Transverse colon (tissue), 4 donors: ENCODE measurements at regions of chr22 and their contacts with region 1.

Region 1: GRCh38 chr22:19291580-19292457 is at the start of gene CLTCL1:
- DNase-seq: peak; percentile 86
- H3K4me3 ChIP-seq: peak within 1 kb of the TSS; percentile 80 to 99 (median 94)
- H3K27ac ChIP-seq: peak within 1 kb of the TSS; percentile 75 to 89 (median 83)
- H3K4me1 ChIP-seq: peaks cover 5 to 16% (median 15%) of the 10 kb centered on the region in 4 donors
- H3K27me3 ChIP-seq: peaks cover 9% of the 10 kb centered on the region
- CTCF ChIP-seq: no peak
- EP300 ChIP-seq: no peak
- POLR2A ChIP-seq: peak; percentile 6
- total RNA-seq, gene CLTCL1: 3.8 to 8.6 (median 5.6) TPM

Region 2: GRCh38 chr22:19232623-19233022 is 59.2 kb before region 1 on chr22:
- in situ Hi-C with region 1: no loop called
- intact Hi-C with region 1: no loop called
- DNase-seq: no peak
- H3K4me3 ChIP-seq: no peak overlapping the region
- H3K27ac ChIP-seq: no peak overlapping the region
- H3K4me1 ChIP-seq: no peaks in the 10 kb centered on the region
- H3K27me3 ChIP-seq: no peaks in the 10 kb centered on the region
- CTCF ChIP-seq: no peak
- EP300 ChIP-seq: no peak
- POLR2A ChIP-seq: no peak

Region 3: DNA sequence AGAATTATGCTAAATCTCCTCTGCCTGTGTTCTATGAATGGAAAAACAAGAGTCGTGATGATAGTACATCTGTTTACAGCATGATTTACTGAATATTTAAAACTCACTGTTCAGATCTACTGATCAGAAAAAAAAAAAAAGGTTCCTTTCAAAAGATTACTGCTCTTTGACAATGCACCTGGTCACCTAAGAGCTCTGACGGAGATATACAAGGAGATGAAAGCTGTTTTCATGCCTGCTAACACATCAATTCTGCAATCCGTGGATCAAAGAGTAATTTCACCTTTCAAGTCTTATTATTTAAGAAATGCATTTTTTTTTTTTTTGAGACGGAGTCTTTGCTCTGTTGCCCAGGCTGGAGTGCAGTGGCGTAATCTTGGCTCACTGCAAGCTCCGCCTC is 31.0 kb before region 1 on chr22:
- in situ Hi-C with region 1: no loop called
- intact Hi-C with region 1: loop called (anchors 1 kb)
- DNase-seq: no peak
- H3K4me3 ChIP-seq: no peak overlapping the region
- H3K27ac ChIP-seq: no peak overlapping the region
- H3K4me1 ChIP-seq: peaks cover 0 to 10% (median 0%) of the 10 kb centered on the region in 4 donors
- H3K27me3 ChIP-seq: no peaks in the 10 kb centered on the region
- CTCF ChIP-seq: no peak
- EP300 ChIP-seq: no peak
- POLR2A ChIP-seq: no peak

Region 4: DNA sequence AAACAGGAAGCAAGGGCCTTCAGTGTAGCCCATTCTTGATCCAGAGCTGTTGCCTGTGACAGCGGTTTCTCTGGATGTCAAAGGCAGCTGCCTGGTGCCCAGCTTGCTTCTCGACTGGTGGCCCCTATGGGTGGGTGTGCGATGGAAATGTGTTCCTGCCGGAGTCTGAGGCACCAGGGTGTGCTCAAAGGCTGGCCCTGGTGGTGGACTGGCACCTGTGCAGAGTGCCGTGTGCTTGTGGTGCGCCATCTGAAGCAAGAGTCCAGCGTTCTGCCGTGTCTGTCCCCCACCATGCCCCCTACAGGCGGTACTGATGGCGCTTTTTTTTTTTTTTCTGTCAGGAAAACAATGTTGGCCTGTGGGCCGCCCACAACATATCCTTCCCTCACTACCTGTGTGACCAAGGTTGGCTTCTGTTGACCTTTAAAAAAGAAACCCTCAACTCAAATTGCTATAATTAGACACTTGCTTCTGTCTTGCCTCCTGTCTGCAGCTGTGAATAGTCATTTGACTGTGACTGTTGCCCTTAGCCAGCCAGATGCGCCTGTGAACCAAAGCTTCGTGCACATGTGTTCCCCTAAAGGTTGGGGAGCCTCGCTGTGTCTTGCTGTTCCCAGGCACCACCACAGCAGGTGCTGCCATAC is 819.3 kb after region 1 on chr22:
- in situ Hi-C with region 1: no loop called
- intact Hi-C with region 1: no loop called
- DNase-seq: no peak
- H3K4me3 ChIP-seq: no peak overlapping the region
- H3K27ac ChIP-seq: no peak overlapping the region
- H3K4me1 ChIP-seq: peaks cover 4 to 8% (median 7%) of the 10 kb centered on the region in 4 donors
- H3K27me3 ChIP-seq: no peaks in the 10 kb centered on the region
- CTCF ChIP-seq: peak in 1 of 5 experiments; percentile 18
- EP300 ChIP-seq: no peak
- POLR2A ChIP-seq: no peak

Region 5: GRCh38 chr22:20430720-20431510 is 1139.1 kb after region 1 on chr22:
- in situ Hi-C with region 1: no loop called
- intact Hi-C with region 1: loop called (anchors 5 kb)
- DNase-seq: peak; percentile 57
- H3K4me3 ChIP-seq: peak overlapping the region in 2 of 4 donors; percentile 19 to 27
- H3K27ac ChIP-seq: no peak overlapping the region
- H3K4me1 ChIP-seq: peaks cover 17 to 37% (median 32%) of the 10 kb centered on the region in 4 donors
- H3K27me3 ChIP-seq: peaks cover 95% of the 10 kb centered on the region
- CTCF ChIP-seq: peak; percentile 27 to 50 (median 39)
- EP300 ChIP-seq: no peak
- POLR2A ChIP-seq: no peak